ENCODE measurements at regions of chr7 and their contacts with region 1.

Region 1: DNA sequence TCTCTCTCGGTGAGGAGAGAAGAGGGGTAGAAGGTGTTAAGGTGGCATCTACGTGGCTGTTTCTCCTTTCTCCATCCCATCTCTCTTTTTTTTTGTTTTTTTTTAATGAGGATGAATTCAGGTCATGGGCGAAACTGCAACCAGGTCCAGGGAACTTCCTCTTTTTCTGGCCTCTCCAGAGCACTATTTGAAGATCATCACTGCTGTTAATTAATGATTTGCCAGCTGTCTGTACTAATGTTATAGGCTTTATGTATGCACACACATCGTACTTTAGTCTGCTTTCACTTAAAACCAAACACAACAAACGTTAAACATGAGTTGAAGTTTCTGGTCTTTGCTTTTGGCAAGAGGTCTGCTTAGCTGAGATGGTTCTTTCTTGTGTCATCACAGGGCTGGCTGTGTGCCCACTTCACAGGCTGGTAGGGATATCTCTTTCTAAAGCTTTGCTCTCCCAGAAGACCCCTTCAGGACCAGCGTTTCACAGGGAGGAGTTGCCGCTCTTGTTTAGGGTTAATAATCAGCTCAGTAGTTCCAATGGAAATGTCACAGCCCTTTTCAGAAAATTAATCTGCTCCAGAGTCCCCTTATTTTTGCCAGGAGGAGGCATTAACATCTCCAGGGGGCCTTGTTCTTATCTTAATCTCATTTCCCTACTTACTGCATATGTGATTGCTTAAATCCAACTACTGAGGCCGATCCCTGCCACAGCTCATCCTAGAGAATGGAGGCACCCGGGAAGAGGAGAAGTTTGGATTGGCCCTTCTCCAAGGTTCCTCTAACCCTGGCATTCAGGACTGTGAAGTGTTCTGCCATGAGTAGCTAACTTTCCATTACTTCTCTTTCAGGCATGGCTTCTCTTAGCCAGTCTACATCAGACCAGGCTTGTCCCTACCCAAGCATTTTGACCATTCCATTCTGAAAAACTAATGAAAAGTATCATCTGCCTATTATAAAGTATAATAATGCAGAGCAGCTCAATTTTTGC is 273.9 kb upstream of the NFE2L3 start:
- DNase-seq: no peak
- H3K4me3 ChIP-seq: no peak overlapping the region
- H3K27ac ChIP-seq: no peak overlapping the region
- H3K4me1 ChIP-seq: no peaks in the 10 kb centered on the region
- H3K27me3 ChIP-seq: peaks cover 9% of the 10 kb centered on the region
- CTCF ChIP-seq: no peak

Region 2: GRCh38 chr7:26151953-26152781 is 274.1 kb after region 1 on chr7 and contains the start of gene NFE2L3:
- dilution Hi-C with region 1: loop called (anchors 10 kb)
- DNase-seq: no peak
- H3K4me3 ChIP-seq: peak within 1 kb of the TSS; percentile 41 to 62 (median 53)
- H3K27ac ChIP-seq: no peak within 1 kb of the TSS
- H3K4me1 ChIP-seq: peaks cover 43% of the 10 kb centered on the region
- H3K27me3 ChIP-seq: no peaks in the 10 kb centered on the region
- CTCF ChIP-seq: no peak
- polyA plus RNA-seq, gene NFE2L3: 10.7 to 17.8 TPM (median 14.2 TPM) in 3 replicates